ENCODE measurements at regions of chr11 and their contacts with region 1.

Region 1: DNA sequence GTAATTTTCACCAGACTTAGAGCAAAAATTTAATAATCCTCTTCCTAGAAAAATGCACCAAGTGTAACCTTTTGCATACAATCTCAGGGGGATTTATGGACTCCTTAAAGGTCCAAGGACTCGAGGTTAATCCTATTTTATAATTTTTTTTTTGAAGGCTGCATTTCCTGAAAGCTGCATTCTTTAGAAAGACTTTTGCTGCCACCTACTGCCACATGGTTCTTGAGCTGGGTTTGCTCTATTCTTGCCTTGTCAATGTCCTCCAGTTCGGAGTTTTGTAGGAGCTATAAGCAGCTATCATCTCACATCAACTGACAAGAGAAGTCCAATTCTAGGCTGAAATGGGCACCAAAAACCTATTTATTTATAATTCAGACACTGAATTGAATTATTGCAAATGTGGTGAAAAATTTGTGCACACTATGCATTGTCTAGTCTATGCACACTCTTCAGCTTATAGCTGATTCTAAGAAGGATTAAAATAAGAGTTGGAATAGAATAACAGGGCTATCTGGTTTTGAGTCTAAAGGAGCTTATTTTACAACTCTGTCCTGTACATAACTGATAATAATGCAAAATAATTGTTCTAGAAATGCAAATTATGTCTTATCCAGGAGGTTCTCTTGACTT is 31.3 kb downstream of the TRAF6 start:
- DNase-seq: no peak
- H3K4me3 ChIP-seq: no peak overlapping the region
- H3K27me3 ChIP-seq: no peaks in the 10 kb centered on the region
- CTCF ChIP-seq: peak; percentile 69

Region 2: GRCh38 chr11:36265793-36266628 is 212.8 kb before region 1 on chr11:
- CTCF ChIA-PET with region 1: interaction called, 31 read pairs
- POLR2A ChIA-PET with region 1: no interaction called
- DNase-seq: no peak
- H3K4me3 ChIP-seq: no peak overlapping the region
- H3K27me3 ChIP-seq: peaks cover 2% of the 10 kb centered on the region; the same call in 1 of the 2 replicates
- CTCF ChIP-seq: peak; percentile 87

Region 3: GRCh38 chr11:36376888-36377758 is 101.7 kb before region 1 on chr11:
- CTCF ChIA-PET with region 1: interaction called, 41 read pairs
- POLR2A ChIA-PET with region 1: no interaction called
- DNase-seq: no peak
- H3K4me3 ChIP-seq: peak overlapping the region; percentile 73
- H3K27me3 ChIP-seq: no peaks in the 10 kb centered on the region
- CTCF ChIP-seq: peak; percentile 84

Region 4: GRCh38 chr11:36492724-36493304 is 14.0 kb after region 1 on chr11:
- CTCF ChIA-PET with region 1: interaction called, 19 read pairs
- POLR2A ChIA-PET with region 1: no interaction called
- DNase-seq: no peak
- H3K4me3 ChIP-seq: no peak overlapping the region
- H3K27me3 ChIP-seq: no peaks in the 10 kb centered on the region
- CTCF ChIP-seq: peak; percentile 78